ENCODE measurements at regions of chr9 and their contacts with region 1.

Region 1: GRCh38 chr9:86282077-86282978 is at the start of gene ISCA1:
- DNase-seq: peak; percentile 94 to 99 (median 97)
- H3K4me3 ChIP-seq: peak within 1 kb of the TSS; percentile 63 to 100 (median 95)
- H3K27ac ChIP-seq: peak within 1 kb of the TSS; percentile 86 to 100 (median 98)
- H3K27me3 ChIP-seq: no peaks in the 10 kb centered on the region
- CTCF ChIP-seq: peak in 8 of 56 donors; percentile 2 to 34 (median 10)
- total RNA-seq, gene ISCA1: 41.6 to 97.5 (median 70.2) TPM

Region 2: GRCh38 chr9:85900504-85901201 is 381.7 kb before region 1 on chr9:
- intact Hi-C with region 1: no loop called
- DNase-seq: peak in 1 of 10 donors; percentile 16
- H3K4me3 ChIP-seq: no peak overlapping the region
- H3K27ac ChIP-seq: no peak overlapping the region
- H3K27me3 ChIP-seq: no peaks in the 10 kb centered on the region
- CTCF ChIP-seq: peak in 52 of 56 donors; percentile 18 to 73 (median 50)

Region 3: DNA sequence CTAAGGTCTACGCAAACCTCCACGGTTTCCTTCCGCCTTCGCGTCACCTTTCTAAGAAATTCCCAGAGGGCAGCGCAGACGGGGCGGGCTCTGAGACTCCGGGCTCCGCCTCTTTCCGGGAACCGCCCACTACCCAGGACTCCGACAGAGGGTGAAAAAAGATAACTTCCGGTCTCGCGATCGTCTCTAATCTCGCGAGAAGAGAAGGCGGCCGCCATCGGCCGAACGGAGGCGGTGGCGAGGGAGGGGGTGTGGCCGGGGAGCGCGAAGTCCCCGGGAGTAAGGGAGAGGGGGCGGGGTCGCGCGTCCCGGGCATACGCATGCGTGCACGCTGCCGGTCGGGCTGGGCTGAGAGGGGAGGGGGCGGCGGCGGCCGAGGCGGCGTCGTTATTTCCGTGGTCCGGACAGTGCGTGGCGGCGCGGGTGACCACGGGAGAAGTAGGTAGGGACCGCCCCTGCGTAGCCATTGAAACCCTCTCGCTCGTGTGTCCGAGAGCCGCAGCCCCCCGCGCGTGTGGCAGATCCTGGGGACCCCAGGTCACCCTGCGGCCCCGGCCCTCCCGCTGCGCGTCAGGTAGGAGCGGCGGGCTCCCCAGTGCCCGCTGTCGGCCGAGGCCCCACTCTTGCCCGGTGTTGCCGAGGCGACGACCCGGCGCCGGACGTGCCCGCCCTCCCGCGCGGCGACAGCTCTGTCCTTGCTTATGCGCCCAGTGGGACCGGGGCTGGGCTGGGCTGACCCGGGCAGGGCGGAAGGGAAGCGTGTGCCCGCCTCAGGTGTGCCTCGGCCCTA is 341.3 kb before region 1 on chr9 and contains the start of gene NAA35:
- intact Hi-C with region 1: loop called (anchors 2 kb)
- DNase-seq: peak; percentile 92 to 99 (median 98)
- H3K4me3 ChIP-seq: peak within 1 kb of the TSS; percentile 72 to 100 (median 96)
- H3K27ac ChIP-seq: peak within 1 kb of the TSS; percentile 74 to 99 (median 93)
- H3K27me3 ChIP-seq: no peaks in the 10 kb centered on the region
- CTCF ChIP-seq: peak in 24 of 56 donors; percentile 5 to 44 (median 20)
- total RNA-seq, gene NAA35: 23.8 to 40.6 (median 31.0) TPM

Region 4: DNA sequence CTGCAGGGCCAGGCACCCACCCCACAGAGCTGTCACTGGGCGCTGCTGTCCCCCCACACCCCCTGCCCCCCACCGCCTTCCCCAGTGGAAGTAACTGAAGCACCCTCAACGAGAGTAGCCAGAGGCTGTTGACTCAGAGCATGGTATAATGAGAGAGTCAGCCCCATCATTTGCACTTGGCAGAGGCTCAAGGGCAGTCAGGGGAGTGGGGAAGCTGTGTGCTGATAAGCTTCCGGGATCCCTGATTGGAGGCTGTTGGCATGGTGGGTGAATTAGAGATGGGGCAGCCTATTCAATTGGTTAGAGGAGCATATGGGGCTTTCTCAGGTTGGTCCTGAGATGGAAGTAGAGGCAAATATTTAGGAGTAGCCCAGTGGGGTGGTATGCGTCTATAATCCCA is 105.9 kb before region 1 on chr9:
- intact Hi-C with region 1: no loop called
- DNase-seq: no peak
- H3K4me3 ChIP-seq: no peak overlapping the region
- H3K27ac ChIP-seq: no peak overlapping the region
- H3K27me3 ChIP-seq: no peaks in the 10 kb centered on the region
- CTCF ChIP-seq: no peak

Measured in dorsolateral prefrontal cortex (tissue), 120 donors.